Panc1 (cell line): ENCODE measurements at regions of chr4 and their contacts with region 1.

Region 1: DNA sequence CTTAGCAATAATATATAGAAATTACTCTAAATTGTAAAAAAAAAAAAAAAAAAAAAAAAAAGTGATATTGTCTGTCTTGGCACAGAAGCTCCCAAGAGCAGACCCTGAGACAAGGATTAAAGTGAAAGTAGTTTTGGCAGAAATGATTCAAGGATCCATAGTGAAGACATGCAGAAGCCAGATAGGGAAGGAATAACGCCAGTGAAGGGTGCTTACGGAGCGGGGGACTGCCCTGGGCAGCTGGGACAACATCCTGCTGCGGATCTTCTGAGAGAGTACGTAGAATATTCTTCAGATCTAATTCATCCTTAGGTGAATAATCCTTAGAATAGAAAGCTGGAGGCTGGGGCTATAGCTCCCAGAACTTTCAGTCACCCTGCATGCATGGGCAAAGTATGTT is 39.8 kb downstream of the ARHGAP24 start:
- DNase-seq: no peak
- ATAC-seq: no peak
- H3K4me3 ChIP-seq: peak overlapping the region in 1 of 2 experiments; percentile 38; a peak in 2 of 4 replicates
- H3K27ac ChIP-seq: peak overlapping the region; percentile 65
- H3K4me1 ChIP-seq: peaks cover 23% of the 10 kb centered on the region
- H3K27me3 ChIP-seq: no peaks in the 10 kb centered on the region
- CTCF ChIP-seq: no peak

Region 2: GRCh38 chr4:85738721-85739120 is 223.9 kb after region 1 on chr4:
- CTCF ChIA-PET with region 1: no interaction called
- POLR2A ChIA-PET with region 1: interaction called, 15 read pairs
- in situ Hi-C with region 1: no loop called
- intact Hi-C with region 1: no loop called
- DNase-seq: no peak
- ATAC-seq: no peak
- H3K4me3 ChIP-seq: no peak overlapping the region
- H3K27ac ChIP-seq: 0 out of 2 replicates have a peak overlapping the region, but pooled peaks have one; percentile 34
- H3K4me1 ChIP-seq: peaks cover 28% of the 10 kb centered on the region
- H3K27me3 ChIP-seq: no peaks in the 10 kb centered on the region
- CTCF ChIP-seq: no peak